Panc1 (cell line): ENCODE measurements at regions of chr18 and their contacts with region 1.

Region 1: GRCh38 chr18:9136315-9137155 is at the start of gene ANKRD12:
- DNase-seq: peak; percentile 69
- ATAC-seq: peak; percentile 89
- H3K4me3 ChIP-seq: peak within 1 kb of the TSS; percentile 66 to 100
- H3K27ac ChIP-seq: peak within 1 kb of the TSS; percentile 88
- H3K4me1 ChIP-seq: peaks cover 41% of the 10 kb centered on the region
- H3K27me3 ChIP-seq: no peaks in the 10 kb centered on the region
- CTCF ChIP-seq: no peak
- total RNA-seq, gene ANKRD12: 30.7 TPM

Region 2: GRCh38 chr18:8730080-8730827 is 406.3 kb before region 1 on chr18:
- CTCF ChIA-PET with region 1: interaction called, 13 read pairs
- POLR2A ChIA-PET with region 1: no interaction called
- in situ Hi-C with region 1: no loop called
- intact Hi-C with region 1: no loop called
- DNase-seq: no peak
- ATAC-seq: peak; percentile 96
- H3K4me3 ChIP-seq: peak overlapping the region in 1 of 2 experiments; percentile 7; a peak in 2 of 4 replicates
- H3K27ac ChIP-seq: peak overlapping the region; percentile 91
- H3K4me1 ChIP-seq: peaks cover 35% of the 10 kb centered on the region
- H3K27me3 ChIP-seq: no peaks in the 10 kb centered on the region
- CTCF ChIP-seq: no peak

Region 3: GRCh38 chr18:9296233-9297006 is 159.9 kb after region 1 on chr18:
- CTCF ChIA-PET with region 1: no interaction called
- POLR2A ChIA-PET with region 1: no interaction called
- in situ Hi-C with region 1: no loop called
- intact Hi-C with region 1: no loop called
- DNase-seq: no peak
- ATAC-seq: no peak
- H3K4me3 ChIP-seq: no peak overlapping the region
- H3K27ac ChIP-seq: no peak overlapping the region
- H3K4me1 ChIP-seq: no peaks in the 10 kb centered on the region
- H3K27me3 ChIP-seq: no peaks in the 10 kb centered on the region
- CTCF ChIP-seq: no peak